ENCODE measurements at regions of chr7 and their contacts with region 1.

Region 1: DNA sequence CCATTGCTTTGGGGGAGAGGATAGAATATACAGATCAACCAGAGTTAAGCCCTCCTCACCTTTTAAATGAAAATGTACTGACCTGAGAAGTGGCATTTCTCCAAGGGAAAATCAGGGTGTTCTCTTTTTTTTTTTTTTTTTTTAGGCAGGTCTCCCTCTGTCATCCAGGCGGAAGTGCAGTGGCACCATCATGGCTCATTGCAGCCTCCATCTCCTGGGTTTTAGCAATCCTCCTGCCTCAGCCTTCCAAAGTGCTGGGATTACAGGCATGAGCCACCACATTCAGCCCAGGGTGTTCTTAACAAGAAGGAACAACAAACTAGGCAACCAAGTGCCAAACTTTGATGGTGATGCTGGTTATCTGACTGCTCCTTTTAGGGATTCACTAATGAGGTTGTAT is 111.0 kb downstream of the SVOPL start:
- DNase-seq: no peak
- H3K4me3 ChIP-seq: no peak overlapping the region
- H3K27ac ChIP-seq: no peak overlapping the region
- H3K4me1 ChIP-seq: no peaks in the 10 kb centered on the region
- H3K27me3 ChIP-seq: no peaks in the 10 kb centered on the region
- CTCF ChIP-seq: no peak
- POLR2A ChIP-seq: no peak

Region 2: GRCh38 chr7:140269004-140269638 is 1679.0 kb after region 1 on chr7:
- intact Hi-C with region 1: loop called (anchors 5 kb)
- DNase-seq: no peak
- H3K4me3 ChIP-seq: no peak overlapping the region
- H3K27ac ChIP-seq: no peak overlapping the region
- H3K4me1 ChIP-seq: no peaks in the 10 kb centered on the region
- H3K27me3 ChIP-seq: no peaks in the 10 kb centered on the region
- CTCF ChIP-seq: no peak
- POLR2A ChIP-seq: no peak

Measured in vagina (tissue), 2 donors.